Activated CD4-positive, alpha-beta T cell treated with anti-CD3 and anti-CD28 coated beads, Interleukin-2, amount 10 ng/mL, durations not matched to agents 24 days and 14 days (primary cell): ENCODE measurements at regions of chr2 and their contacts with region 1.

Region 1: GRCh38 chr2:214809751-214810564 is 475 bp upstream of the BARD1 start:
- DNase-seq: peak; percentile 100
- H3K4me3 Mint-ChIP-seq: peak overlapping the region; percentile 90
- H3K27ac Mint-ChIP-seq: peak overlapping the region; percentile 83
- H3K4me1 Mint-ChIP-seq: peaks cover 28% of the 10 kb centered on the region
- H3K27me3 Mint-ChIP-seq: peaks cover 20% of the 10 kb centered on the region

Region 2: GRCh38 chr2:213284105-213285090 is 1525.6 kb before region 1 on chr2 and contains the start of gene SPAG16:
- intact Hi-C with region 1: loop called (anchors 10 kb)
- DNase-seq: peak; percentile 99
- H3K4me3 Mint-ChIP-seq: peak within 1 kb of the TSS; percentile 96
- H3K27ac Mint-ChIP-seq: peak within 1 kb of the TSS; percentile 87
- H3K4me1 Mint-ChIP-seq: peaks cover 17% of the 10 kb centered on the region
- H3K27me3 Mint-ChIP-seq: peaks cover 5% of the 10 kb centered on the region
- total RNA-seq, gene SPAG16: 6.8 and 7.2 TPM in 2 replicates

Region 3: GRCh38 chr2:214737188-214737587 is 72.8 kb before region 1 on chr2:
- intact Hi-C with region 1: loop called (anchors 5 kb)
- DNase-seq: no peak
- H3K4me3 Mint-ChIP-seq: peak overlapping the region; percentile 30
- H3K27ac Mint-ChIP-seq: peak overlapping the region; percentile 49
- H3K4me1 Mint-ChIP-seq: peaks cover 5% of the 10 kb centered on the region
- H3K27me3 Mint-ChIP-seq: no peaks in the 10 kb centered on the region

Region 4: GRCh38 chr2:214765180-214765579 is 44.8 kb before region 1 on chr2:
- intact Hi-C with region 1: loop called (anchors 5 kb)
- DNase-seq: no peak
- H3K4me3 Mint-ChIP-seq: no peak overlapping the region
- H3K27ac Mint-ChIP-seq: no peak overlapping the region
- H3K4me1 Mint-ChIP-seq: no peaks in the 10 kb centered on the region
- H3K27me3 Mint-ChIP-seq: no peaks in the 10 kb centered on the region

Region 5: DNA sequence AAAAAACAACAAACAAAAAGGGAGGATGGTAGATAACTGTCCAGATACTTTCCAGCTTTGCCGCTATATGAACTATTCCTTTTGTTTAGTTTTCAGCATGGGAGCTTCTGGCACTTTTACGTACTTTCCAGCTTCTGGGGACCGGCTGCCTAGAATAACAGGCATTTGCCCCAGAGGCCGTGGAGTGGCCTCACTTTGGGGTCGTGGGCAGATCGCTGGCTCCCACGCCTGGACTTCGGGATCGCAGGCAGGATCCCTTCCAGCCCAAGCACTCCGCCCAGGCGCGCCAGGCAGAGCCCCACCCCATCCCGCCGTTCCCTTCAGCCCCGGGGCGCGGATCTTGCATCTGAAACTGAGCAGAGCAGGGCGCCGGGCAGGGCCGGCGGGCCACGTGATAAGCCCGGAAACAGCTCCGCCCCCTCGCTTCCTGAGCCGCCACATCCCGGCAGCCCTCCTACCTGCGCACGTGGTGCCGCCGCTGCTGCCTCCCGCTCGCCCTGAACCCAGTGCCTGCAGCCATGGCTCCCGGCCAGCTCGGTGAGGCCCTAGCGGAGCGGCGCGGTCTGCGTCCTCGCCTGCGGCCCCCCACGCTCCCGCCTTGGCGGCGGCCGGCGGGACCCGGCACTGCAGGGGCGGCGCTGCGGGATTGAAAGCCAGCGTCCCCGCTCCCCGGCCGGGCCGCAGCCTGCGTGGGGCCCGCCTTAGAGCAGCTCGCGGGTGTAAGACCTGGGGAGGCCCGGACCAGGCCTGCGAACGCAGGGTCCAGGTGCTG is 501.9 kb after region 1 on chr2 and contains the start of gene ATIC:
- intact Hi-C with region 1: loop called (anchors 1 kb)
- DNase-seq: peak; percentile 98
- H3K4me3 Mint-ChIP-seq: peak within 1 kb of the TSS; percentile 95
- H3K27ac Mint-ChIP-seq: peak within 1 kb of the TSS; percentile 95
- H3K4me1 Mint-ChIP-seq: peaks cover 31% of the 10 kb centered on the region
- H3K27me3 Mint-ChIP-seq: peaks cover 4% of the 10 kb centered on the region
- total RNA-seq, gene ATIC: 316 and 322 TPM in 2 replicates